ENCODE measurements at regions of chr18 and their contacts with region 1.

Region 1: GRCh38 chr18:5546660-5547059 is 2.9 kb upstream of the EPB41L3 start:
- DNase-seq: peak in 3 of 14 experiments; percentile 6 to 33 (median 31)
- ATAC-seq: peak; percentile 53
- H3K4me3 ChIP-seq: no peak overlapping the region
- H3K4me3 Mint-ChIP-seq: peak overlapping the region; percentile 34
- H3K27ac ChIP-seq: no peak overlapping the region
- H3K27ac Mint-ChIP-seq: no peak overlapping the region
- H3K4me1 ChIP-seq: peaks cover 2% of the 10 kb centered on the region
- H3K4me1 Mint-ChIP-seq: peaks cover 16% of the 10 kb centered on the region
- H3K27me3 ChIP-seq: peaks cover 17 to 37% of the 10 kb centered on the region in 2 experiments
- H3K27me3 Mint-ChIP-seq: peaks cover 51% of the 10 kb centered on the region
- CTCF ChIP-seq: peak; percentile 18

Region 2: GRCh38 chr18:5456577-5457463 is 89.8 kb before region 1 on chr18:
- CTCF ChIA-PET with region 1: no interaction called
- POLR2A ChIA-PET with region 1: interaction called, 4 read pairs
- intact Hi-C with region 1: loop called in 1 of 2 experiments (anchors 5 kb)
- DNase-seq: peak in 5 of 14 experiments; percentile 4 to 50 (median 30)
- ATAC-seq: peak; percentile 78
- H3K4me3 ChIP-seq: peak overlapping the region; percentile 50
- H3K4me3 Mint-ChIP-seq: peak overlapping the region; percentile 84
- H3K27ac ChIP-seq: peak overlapping the region in 1 of 2 donors; percentile 65
- H3K27ac Mint-ChIP-seq: peak overlapping the region; percentile 90
- H3K4me1 ChIP-seq: peaks cover 5% of the 10 kb centered on the region
- H3K4me1 Mint-ChIP-seq: peaks cover 36% of the 10 kb centered on the region
- H3K27me3 ChIP-seq: no peaks in the 10 kb centered on the region
- H3K27me3 Mint-ChIP-seq: no peaks in the 10 kb centered on the region
- CTCF ChIP-seq: peak; percentile 59